Gastrocnemius medialis (tissue), 4 donors: ENCODE measurements at regions of chr7 and their contacts with region 1.

Region 1: DNA sequence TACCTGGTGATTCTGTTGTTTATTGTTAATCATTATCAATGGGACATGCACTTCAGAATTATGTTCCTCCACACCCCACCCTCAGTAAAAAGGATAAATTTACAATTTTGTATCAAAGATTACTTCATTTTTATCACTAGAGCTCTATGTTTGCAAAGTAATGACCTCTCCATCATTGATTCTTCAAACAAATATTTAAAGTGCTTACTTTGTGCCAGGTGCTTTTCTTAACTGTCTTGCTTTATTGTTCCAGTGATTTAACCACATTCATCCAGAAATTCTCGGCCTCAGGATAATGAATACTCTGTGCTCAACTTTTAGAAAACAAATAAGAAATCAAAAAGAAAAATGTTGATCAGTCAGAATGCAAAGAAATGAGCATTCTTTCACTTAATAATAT is 144.9 kb upstream of the FOXP2 start:
- DNase-seq: no peak
- ATAC-seq: no peak
- H3K4me3 ChIP-seq: no peak overlapping the region
- H3K27ac ChIP-seq: no peak overlapping the region
- H3K4me1 ChIP-seq: peaks cover 3 to 7% of the 10 kb centered on the region in 2 donors
- H3K27me3 ChIP-seq: no peaks in the 10 kb centered on the region
- CTCF ChIP-seq: no peak
- POLR2A ChIP-seq: no peak

Region 2: GRCh38 chr7:113891828-113892227 is 377.9 kb before region 1 on chr7:
- in situ Hi-C with region 1: no loop called
- intact Hi-C with region 1: no loop called
- DNase-seq: no peak
- ATAC-seq: peak; percentile 50 to 64
- H3K4me3 ChIP-seq: peak overlapping the region in 1 of 4 donors; percentile 34
- H3K27ac ChIP-seq: peak overlapping the region; percentile 57 to 88 (median 71)
- H3K4me1 ChIP-seq: peaks cover 44 to 63% of the 10 kb centered on the region in 2 donors
- H3K27me3 ChIP-seq: no peaks in the 10 kb centered on the region
- CTCF ChIP-seq: no peak
- POLR2A ChIP-seq: no peak

Region 3: GRCh38 chr7:114217026-114217425 is 52.7 kb before region 1 on chr7:
- in situ Hi-C with region 1: no loop called
- intact Hi-C with region 1: loop called (anchors 5 kb)
- DNase-seq: no peak
- ATAC-seq: no peak
- H3K4me3 ChIP-seq: no peak overlapping the region
- H3K27ac ChIP-seq: no peak overlapping the region
- H3K4me1 ChIP-seq: peaks cover 0 to 8% of the 10 kb centered on the region in 2 donors
- H3K27me3 ChIP-seq: no peaks in the 10 kb centered on the region
- CTCF ChIP-seq: no peak
- POLR2A ChIP-seq: no peak

Region 4: DNA sequence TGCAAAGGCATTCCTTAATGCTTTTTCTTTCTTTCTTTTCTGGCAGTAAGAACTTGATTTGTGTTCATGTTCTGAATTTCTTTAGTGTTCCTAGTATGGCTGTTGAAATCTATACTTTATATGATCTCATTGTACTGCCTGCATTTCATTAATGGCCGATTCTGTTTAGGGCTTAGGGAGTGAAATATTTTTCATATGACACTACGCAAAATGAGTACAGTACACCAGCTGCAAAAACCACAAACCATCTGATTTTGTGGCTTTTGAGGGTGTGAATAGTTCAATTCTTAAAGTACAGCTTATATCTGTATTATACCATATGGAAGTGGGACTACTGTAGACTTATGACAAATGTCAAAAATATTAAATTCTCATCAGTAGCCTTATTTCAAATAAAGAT is 75.8 kb after region 1 on chr7:
- in situ Hi-C with region 1: no loop called
- intact Hi-C with region 1: no loop called
- DNase-seq: no peak
- ATAC-seq: no peak
- H3K4me3 ChIP-seq: no peak overlapping the region
- H3K27ac ChIP-seq: no peak overlapping the region
- H3K4me1 ChIP-seq: no peaks in the 10 kb centered on the region
- H3K27me3 ChIP-seq: no peaks in the 10 kb centered on the region
- CTCF ChIP-seq: no peak
- POLR2A ChIP-seq: no peak